ENCODE measurements at regions of chr1 and their contacts with region 1.

Region 1: GRCh38 chr1:156920233-156921052 is at the start of gene LRRC71:
- DNase-seq: peak; percentile 94 to 96 (median 95)
- ATAC-seq: peak; percentile 97
- H3K4me3 ChIP-seq: peak within 1 kb of the TSS; percentile 15; the same call in 1 of the 2 replicates
- H3K27ac ChIP-seq: no peak within 1 kb of the TSS
- H3K4me1 ChIP-seq: peaks cover 17 to 34% of the 10 kb centered on the region in 2 experiments
- H3K27me3 ChIP-seq: peaks cover 8 to 17% of the 10 kb centered on the region in 2 experiments; a peak in 3 of 5 replicates
- CTCF ChIP-seq: peak; percentile 97 to 98 (median 97)
- EP300 ChIP-seq: no peak
- POLR2A ChIP-seq: no peak
- RAD21 ChIP-seq: peak; percentile 99
- polyA plus RNA-seq, gene LRRC71: 0.23 to 0.38 TPM

Region 2: DNA sequence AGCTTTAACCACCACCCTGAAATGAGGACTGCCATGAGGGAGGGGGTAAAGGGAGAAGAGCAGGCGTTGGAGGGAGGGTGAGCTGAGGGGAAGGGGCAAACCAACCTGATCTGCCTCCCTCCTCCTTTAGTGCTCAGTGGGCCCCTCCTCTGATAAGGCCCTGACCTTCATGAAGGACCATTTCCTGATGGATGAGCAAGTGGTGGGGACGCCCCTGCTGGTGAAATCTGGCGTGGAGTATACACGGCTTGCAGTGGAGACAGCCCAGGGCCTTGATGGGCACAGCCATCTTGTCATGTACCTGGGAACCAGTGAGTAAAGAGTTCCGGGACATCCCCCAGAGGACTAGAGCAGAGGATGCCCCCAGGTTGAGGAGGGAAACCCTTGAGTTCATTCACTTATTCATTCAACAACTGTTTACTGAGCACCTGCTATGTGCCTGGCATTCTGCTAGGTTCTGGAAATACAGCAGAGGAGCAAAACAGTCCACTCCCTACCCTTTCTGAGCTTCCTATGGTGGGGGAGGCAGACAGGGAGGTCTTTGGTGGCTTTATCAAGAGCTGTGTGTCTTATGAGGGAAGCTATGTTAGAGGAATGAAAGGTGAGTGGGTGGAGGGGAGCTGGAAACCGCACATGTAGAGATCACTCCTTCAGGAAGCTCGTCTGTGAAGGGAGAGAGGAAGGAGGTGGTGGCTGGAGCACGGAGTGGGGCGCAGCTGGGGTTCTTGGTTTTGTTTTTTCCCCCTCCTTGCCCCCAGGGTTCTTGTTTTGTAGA is 747.6 kb before region 1 on chr1:
- CTCF ChIA-PET with region 1: no interaction called
- POLR2A ChIA-PET with region 1: no interaction called
- in situ Hi-C with region 1: no loop called
- intact Hi-C with region 1: no loop called
- DNase-seq: peak; percentile 40 to 73 (median 53)
- ATAC-seq: peak; percentile 79
- H3K4me3 ChIP-seq: no peak overlapping the region
- H3K27ac ChIP-seq: no peak overlapping the region
- H3K4me1 ChIP-seq: peaks cover 7 to 17% of the 10 kb centered on the region in 2 experiments; a peak in 4 of 5 replicates
- H3K27me3 ChIP-seq: no peaks in the 10 kb centered on the region
- CTCF ChIP-seq: peak; percentile 24 to 46 (median 28); a peak in 2 of 6 replicates
- EP300 ChIP-seq: no peak
- POLR2A ChIP-seq: no peak
- RAD21 ChIP-seq: no peak

Region 3: GRCh38 chr1:156910309-156910782 is 10.1 kb before region 1 on chr1:
- CTCF ChIA-PET with region 1: interaction called, 19 read pairs
- POLR2A ChIA-PET with region 1: interaction called, 4 read pairs
- in situ Hi-C with region 1: no loop called
- intact Hi-C with region 1: loop called (anchors 1 kb)
- DNase-seq: peak; percentile 79 to 89 (median 86)
- ATAC-seq: peak; percentile 49
- H3K4me3 ChIP-seq: peak overlapping the region; percentile 14; the same call in 1 of the 2 replicates
- H3K27ac ChIP-seq: no peak overlapping the region
- H3K4me1 ChIP-seq: peaks cover 52 to 73% of the 10 kb centered on the region in 2 experiments
- H3K27me3 ChIP-seq: no peaks in the 10 kb centered on the region
- CTCF ChIP-seq: peak; percentile 72 to 82 (median 76)
- EP300 ChIP-seq: no peak
- POLR2A ChIP-seq: no peak
- RAD21 ChIP-seq: peak; percentile 49 to 64

Region 4: DNA sequence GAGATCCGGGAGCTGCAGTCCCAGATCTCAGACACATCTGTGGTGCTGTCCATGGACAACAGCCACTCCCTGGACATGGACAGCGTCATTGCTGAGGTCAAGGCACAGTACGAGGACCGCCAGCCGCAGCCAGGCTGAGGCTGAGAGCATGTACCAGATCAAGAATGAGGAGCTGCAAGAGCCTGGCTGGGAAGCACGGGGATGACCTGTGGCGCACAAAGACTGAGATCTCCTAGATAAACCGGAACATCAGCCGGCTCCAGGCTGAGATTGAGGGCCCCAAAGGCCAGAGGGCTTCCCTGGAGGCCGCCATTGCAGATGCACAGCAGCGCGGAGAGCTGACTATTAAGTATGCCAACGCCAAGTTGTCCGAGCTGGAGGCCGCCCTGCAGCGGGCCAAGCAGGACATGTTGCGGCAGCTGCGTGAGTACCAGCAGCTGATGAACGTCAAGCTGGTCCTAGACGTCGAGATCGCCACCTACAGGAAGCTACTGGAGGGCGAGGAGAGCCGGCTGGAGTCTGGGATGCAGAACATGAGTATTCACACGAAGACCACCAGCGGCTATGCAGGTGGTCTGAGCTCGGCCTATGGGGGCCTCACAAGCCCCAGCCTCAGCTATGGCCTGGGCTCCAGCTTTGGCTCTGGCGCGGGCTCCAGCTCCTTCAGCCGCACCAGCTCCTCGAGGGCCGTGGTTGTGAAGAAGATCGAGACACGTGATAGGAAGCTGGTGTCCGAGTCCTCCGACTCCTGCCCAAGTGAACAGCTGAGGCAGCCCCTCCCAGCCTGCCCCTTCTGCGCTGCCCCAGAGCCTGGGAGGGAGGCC is 153.7 kb after region 1 on chr1:
- CTCF ChIA-PET with region 1: interaction called, 3 read pairs
- POLR2A ChIA-PET with region 1: no interaction called
- in situ Hi-C with region 1: no loop called
- intact Hi-C with region 1: loop called (anchors 2 kb)
- DNase-seq: peak in 2 of 4 experiments; percentile 55 to 83
- ATAC-seq: peak; percentile 80
- H3K4me3 ChIP-seq: no peak overlapping the region
- H3K27ac ChIP-seq: no peak overlapping the region
- H3K4me1 ChIP-seq: peaks cover 0 to 13% of the 10 kb centered on the region in 2 experiments; a peak in 3 of 5 replicates
- H3K27me3 ChIP-seq: peaks cover 0 to 15% of the 10 kb centered on the region in 2 experiments; a peak in 4 of 5 replicates
- CTCF ChIP-seq: peak; percentile 70 to 76 (median 71)
- EP300 ChIP-seq: no peak
- POLR2A ChIP-seq: no peak
- RAD21 ChIP-seq: peak; percentile 55 to 78

Measured in K562 (cell line).